H1 (cell line): ENCODE measurements at regions of chr16 and their contacts with region 1.

Region 1: DNA sequence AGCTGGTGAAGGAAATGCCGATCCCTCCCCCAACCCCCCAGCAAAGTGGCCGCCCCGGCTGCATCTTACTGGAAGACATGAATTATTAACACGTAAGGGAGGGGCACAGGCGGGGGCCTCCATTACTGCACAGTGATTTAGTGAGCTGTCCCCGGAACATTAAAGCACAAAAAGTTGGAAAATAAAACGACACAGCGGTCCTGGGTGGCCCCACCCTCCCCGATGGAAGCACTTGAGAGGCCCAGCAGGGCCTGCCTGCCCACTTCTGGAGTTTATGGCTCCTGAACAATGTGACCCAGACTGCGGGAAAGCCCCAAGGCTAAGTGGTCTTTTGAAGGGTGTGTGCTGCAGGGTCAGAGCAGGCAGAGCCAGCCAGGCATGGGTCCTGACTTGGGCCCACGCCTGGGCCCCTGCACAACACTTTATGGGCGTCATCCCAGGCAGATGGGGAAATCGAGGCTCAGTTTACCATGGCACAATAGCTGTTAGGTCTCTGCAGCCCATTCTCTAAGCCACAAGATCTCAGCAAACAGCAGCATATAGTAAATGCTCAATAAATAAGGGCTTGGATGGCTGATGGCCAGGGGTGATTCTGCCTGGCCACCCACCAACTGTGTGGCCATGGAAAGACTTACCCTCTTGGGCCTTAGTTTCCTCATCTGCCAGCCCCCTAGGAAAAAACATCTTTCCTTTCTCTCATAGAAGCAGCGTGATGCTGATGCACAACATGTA is 22.8 kb downstream of the CCDC102A start:
- DNase-seq: no peak
- H3K4me3 ChIP-seq: no peak overlapping the region
- H3K27ac ChIP-seq: no peak overlapping the region
- H3K4me1 ChIP-seq: peaks cover 0 to 3% (median 1%) of the 10 kb centered on the region in 4 experiments; a peak in 2 of 7 replicates
- H3K27me3 ChIP-seq: no peaks in the 10 kb centered on the region
- CTCF ChIP-seq: no peak
- EP300 ChIP-seq: no peak
- POLR2A ChIP-seq: no peak
- RAD21 ChIP-seq: no peak

Region 2: GRCh38 chr16:57422026-57422944 is 91.3 kb before region 1 on chr16:
- CTCF ChIA-PET with region 1: interaction called, 46 read pairs
- POLR2A ChIA-PET with region 1: interaction called, 3 read pairs
- DNase-seq: peak in 1 of 2 experiments; percentile 60
- H3K4me3 ChIP-seq: no peak overlapping the region
- H3K27ac ChIP-seq: no peak overlapping the region
- H3K4me1 ChIP-seq: peaks cover 0 to 5% (median 1%) of the 10 kb centered on the region in 4 experiments; a peak in 3 of 7 replicates
- H3K27me3 ChIP-seq: no peaks in the 10 kb centered on the region
- CTCF ChIP-seq: peak; percentile 56 to 73 (median 61)
- EP300 ChIP-seq: no peak
- POLR2A ChIP-seq: no peak
- RAD21 ChIP-seq: peak; percentile 71 to 77

Region 3: DNA sequence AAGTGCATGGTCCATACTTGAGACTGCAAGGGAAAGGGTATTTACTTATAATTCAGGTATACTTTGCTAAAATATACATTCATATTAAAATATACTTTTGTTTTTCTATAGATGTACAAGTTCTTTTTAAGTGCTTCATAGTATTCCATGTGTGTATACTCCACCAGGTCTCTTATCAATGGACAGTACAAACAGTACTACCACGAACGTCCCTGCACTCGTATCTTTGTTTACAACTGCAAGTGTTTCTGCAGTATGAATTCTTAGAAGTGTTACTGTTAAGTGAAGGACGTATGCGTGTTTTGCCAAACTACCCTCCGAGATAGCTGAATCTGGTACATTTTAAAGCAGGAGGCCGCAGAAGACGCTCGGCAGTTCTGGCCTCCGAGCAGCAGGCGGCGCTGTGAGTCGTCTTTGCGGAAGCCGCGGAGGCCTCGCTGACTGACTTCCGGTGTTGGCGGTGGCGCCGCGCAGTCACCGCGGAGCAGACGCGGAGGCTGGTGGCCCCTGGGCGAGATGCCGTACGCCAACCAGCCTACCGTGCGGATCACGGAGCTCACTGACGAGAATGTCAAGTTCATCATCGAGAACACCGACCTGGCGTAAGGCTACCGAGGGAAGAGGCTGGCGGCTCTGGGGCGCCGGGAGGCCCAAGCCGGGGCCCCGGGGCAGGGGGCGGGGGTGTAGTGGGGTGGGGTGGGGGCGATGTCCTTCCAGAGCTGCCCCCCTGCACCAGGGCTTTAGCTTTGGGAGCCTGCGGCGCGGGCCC is 51.1 kb before region 1 on chr16 and contains the start of gene POLR2C:
- CTCF ChIA-PET with region 1: interaction called, 41 read pairs
- POLR2A ChIA-PET with region 1: interaction called, 4 read pairs
- DNase-seq: peak; percentile 60 to 95
- H3K4me3 ChIP-seq: peak within 1 kb of the TSS; percentile 93 to 97 (median 96)
- H3K27ac ChIP-seq: no peak within 1 kb of the TSS
- H3K4me1 ChIP-seq: no peaks in the 10 kb centered on the region; a peak in 2 of 7 replicates
- H3K27me3 ChIP-seq: no peaks in the 10 kb centered on the region
- CTCF ChIP-seq: peak; percentile 86 to 97 (median 94)
- EP300 ChIP-seq: peak in 1 of 2 experiments; percentile 51; a peak in 1 of 3 replicates
- POLR2A ChIP-seq: peak; percentile 96 to 97
- RAD21 ChIP-seq: peak; percentile 27 to 55; a peak in 3 of 4 replicates
- total RNA-seq, gene POLR2C: 71.2 and 72.5 TPM in 2 replicates

Region 4: GRCh38 chr16:57485916-57486857 is 27.4 kb before region 1 on chr16 and contains the start of gene DOK4:
- CTCF ChIA-PET with region 1: interaction called, 210 read pairs
- POLR2A ChIA-PET with region 1: interaction called, 4 read pairs
- DNase-seq: peak in 1 of 2 experiments; percentile 91
- H3K4me3 ChIP-seq: peak within 1 kb of the TSS; percentile 53 to 79 (median 72)
- H3K27ac ChIP-seq: no peak within 1 kb of the TSS
- H3K4me1 ChIP-seq: peaks cover 0 to 14% (median 10%) of the 10 kb centered on the region in 4 experiments; a peak in 6 of 7 replicates
- H3K27me3 ChIP-seq: peaks cover 0 to 12% (median 4%) of the 10 kb centered on the region in 4 experiments; a peak in 4 of 7 replicates
- CTCF ChIP-seq: no peak
- EP300 ChIP-seq: no peak
- POLR2A ChIP-seq: no peak
- RAD21 ChIP-seq: no peak
- total RNA-seq, gene DOK4: 28.9 and 29.9 TPM in 2 replicates

Region 5: GRCh38 chr16:57530104-57530521 is 16.6 kb after region 1 on chr16:
- CTCF ChIA-PET with region 1: interaction called, 14 read pairs
- POLR2A ChIA-PET with region 1: interaction called, 28 read pairs
- DNase-seq: no peak
- H3K4me3 ChIP-seq: peak overlapping the region in 2 of 4 experiments; percentile 1 to 73; a peak in 4 of 8 replicates
- H3K27ac ChIP-seq: no peak overlapping the region
- H3K4me1 ChIP-seq: peaks cover 4 to 40% (median 26%) of the 10 kb centered on the region in 4 experiments
- H3K27me3 ChIP-seq: peaks cover 0 to 13% (median 4%) of the 10 kb centered on the region in 4 experiments; a peak in 4 of 7 replicates
- CTCF ChIP-seq: no peak
- EP300 ChIP-seq: no peak
- POLR2A ChIP-seq: no peak
- RAD21 ChIP-seq: no peak